Endothelial cell of umbilical vein (primary cell): ENCODE measurements at regions of chr1 and their contacts with region 1.

Region 1: GRCh38 chr1:55329091-55329490 is 113.9 kb upstream of the USP24 start:
- DNase-seq: no peak
- H3K4me3 ChIP-seq: no peak overlapping the region
- H3K27ac ChIP-seq: no peak overlapping the region
- H3K4me1 ChIP-seq: peaks cover 22% of the 10 kb centered on the region
- H3K27me3 ChIP-seq: no peaks in the 10 kb centered on the region
- CTCF ChIP-seq: no peak
- POLR2A ChIP-seq: no peak

Region 2: DNA sequence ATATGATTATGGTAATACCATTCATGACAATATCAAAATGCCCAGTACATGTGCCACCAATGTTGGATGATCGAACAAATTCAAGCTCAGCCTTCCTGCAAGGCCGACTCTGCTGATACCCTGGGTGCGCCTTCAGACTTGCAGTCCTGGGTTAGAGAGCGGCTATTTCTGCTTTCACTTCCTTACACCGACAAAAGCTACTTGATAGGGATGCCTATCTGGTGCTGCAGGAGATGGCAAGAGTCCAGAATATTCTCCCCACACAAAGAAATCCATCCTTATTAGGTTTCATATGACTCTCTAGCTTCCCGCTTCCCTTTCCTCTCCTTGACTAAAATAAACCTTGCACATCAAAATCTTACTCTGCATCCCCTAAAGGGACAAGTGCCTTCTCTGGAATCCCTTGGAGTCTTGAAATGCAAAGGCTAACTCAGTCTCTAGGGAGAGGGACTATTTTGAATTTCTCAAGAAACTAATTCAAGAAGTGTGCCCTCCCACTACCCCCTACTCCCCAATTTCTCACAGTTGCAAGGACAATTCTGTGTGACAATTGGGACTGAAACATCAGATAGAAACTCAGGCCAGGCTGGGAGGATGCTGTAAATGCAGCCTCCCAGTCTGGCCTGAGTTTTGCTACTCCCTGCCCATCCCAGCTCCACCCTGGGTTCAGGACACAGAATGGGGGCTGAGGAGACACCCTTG is 10.8 kb before region 1 on chr1:
- CTCF ChIA-PET with region 1: interaction called, 26 read pairs
- POLR2A ChIA-PET with region 1: no interaction called
- dilution Hi-C with region 1: no loop called
- intact Hi-C with region 1: loop called (anchors 1 kb)
- DNase-seq: peak; percentile 85
- H3K4me3 ChIP-seq: no peak overlapping the region
- H3K27ac ChIP-seq: peak overlapping the region; percentile 9
- H3K4me1 ChIP-seq: peaks cover 55% of the 10 kb centered on the region
- H3K27me3 ChIP-seq: no peaks in the 10 kb centered on the region
- CTCF ChIP-seq: no peak
- POLR2A ChIP-seq: no peak